Calu3 (cell line): ENCODE measurements at regions of chr15 and their contacts with region 1.

Region 1: DNA sequence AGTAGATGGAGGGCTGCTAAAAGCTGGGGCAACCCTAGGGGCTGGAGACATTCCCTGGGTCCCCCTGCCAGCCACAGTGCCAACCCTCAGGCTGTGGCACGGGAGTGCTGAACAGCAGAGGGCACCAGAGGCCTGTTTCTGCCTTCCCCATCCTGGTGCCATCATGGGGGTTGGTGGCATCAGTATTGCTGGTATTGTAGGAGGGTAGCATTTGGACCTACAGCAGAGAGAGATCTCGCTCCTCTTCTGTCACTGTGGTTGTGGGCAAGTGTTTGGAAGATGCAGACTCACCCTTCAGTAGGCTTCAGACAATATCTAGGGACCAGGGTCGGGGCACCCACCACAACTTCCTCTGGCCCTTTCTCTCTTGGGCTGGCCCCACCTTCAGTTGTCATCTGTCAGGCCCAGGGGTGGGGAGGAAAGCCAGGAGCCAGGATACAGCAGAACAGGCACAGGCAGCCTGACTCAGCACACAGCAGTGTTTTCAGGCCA is 123.5 kb downstream of the RPLP1 start:
- DNase-seq: peak; percentile 88
- H3K4me3 Mint-ChIP-seq: no peak overlapping the region
- H3K27ac Mint-ChIP-seq: no peak overlapping the region
- H3K4me1 Mint-ChIP-seq: peaks cover 31% of the 10 kb centered on the region
- H3K27me3 Mint-ChIP-seq: peaks cover 71% of the 10 kb centered on the region
- CTCF ChIP-seq: peak; percentile 89

Region 2: GRCh38 chr15:69489073-69489571 is 87.0 kb before region 1 on chr15:
- CTCF ChIA-PET with region 1: no interaction called
- intact Hi-C with region 1: loop called (anchors 5 kb)
- DNase-seq: no peak
- H3K4me3 Mint-ChIP-seq: no peak overlapping the region
- H3K27ac Mint-ChIP-seq: no peak overlapping the region
- H3K4me1 Mint-ChIP-seq: no peaks in the 10 kb centered on the region
- H3K27me3 Mint-ChIP-seq: peaks cover 19% of the 10 kb centered on the region
- CTCF ChIP-seq: no peak

Region 3: DNA sequence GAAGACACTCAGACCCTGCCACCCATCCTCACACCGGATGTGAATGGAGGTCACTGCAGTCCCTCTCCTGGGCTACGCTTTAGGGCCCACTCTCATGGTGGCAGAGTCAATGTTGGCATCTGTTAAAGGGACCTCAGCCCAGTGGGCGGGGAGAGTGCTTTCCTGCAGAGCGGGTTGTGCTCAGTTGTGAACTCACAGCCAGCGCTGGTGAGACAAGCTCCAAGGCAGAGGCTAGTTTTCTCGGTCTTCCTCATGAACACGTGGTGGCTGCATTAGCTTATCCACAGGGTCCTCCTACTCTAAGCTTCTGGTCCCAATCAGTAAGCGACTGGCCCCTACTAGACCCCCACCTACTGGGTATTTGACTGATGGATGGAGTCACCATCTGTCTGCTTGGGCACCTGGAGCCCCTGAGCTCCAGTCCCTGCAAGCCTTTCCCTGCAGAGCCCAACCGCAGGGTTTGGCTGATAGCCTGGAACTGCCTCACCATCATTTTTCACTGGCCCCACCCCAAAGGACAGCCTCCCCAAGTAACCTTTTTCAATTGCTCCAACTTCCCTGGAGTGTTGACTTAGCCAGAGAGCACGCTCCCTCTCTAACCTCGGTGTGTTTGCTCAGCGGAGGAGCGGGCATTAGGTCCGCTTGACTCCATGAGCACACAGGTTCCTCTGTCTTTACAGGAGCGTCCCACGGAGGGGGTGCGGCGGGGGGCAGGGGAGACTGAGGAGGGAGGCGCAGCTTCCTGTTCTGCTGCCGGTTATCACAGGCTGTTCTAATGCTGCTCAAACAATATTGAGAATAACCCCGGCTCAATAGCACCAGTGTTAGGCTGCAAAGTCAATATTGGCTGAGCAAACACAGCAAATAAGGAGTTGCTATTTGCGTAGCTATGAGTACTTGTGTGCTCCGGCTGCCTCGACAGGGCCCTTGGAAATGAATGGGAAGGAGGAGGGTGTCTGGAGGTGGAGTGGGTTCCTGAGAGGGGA is 18.2 kb after region 1 on chr15:
- CTCF ChIA-PET with region 1: interaction called, 10 read pairs
- intact Hi-C with region 1: no loop called
- DNase-seq: peak; percentile 97
- H3K4me3 Mint-ChIP-seq: peak overlapping the region; percentile 51
- H3K27ac Mint-ChIP-seq: peak overlapping the region; percentile 57
- H3K4me1 Mint-ChIP-seq: peaks cover 52% of the 10 kb centered on the region
- H3K27me3 Mint-ChIP-seq: peaks cover 65% of the 10 kb centered on the region
- CTCF ChIP-seq: no peak

Region 4: DNA sequence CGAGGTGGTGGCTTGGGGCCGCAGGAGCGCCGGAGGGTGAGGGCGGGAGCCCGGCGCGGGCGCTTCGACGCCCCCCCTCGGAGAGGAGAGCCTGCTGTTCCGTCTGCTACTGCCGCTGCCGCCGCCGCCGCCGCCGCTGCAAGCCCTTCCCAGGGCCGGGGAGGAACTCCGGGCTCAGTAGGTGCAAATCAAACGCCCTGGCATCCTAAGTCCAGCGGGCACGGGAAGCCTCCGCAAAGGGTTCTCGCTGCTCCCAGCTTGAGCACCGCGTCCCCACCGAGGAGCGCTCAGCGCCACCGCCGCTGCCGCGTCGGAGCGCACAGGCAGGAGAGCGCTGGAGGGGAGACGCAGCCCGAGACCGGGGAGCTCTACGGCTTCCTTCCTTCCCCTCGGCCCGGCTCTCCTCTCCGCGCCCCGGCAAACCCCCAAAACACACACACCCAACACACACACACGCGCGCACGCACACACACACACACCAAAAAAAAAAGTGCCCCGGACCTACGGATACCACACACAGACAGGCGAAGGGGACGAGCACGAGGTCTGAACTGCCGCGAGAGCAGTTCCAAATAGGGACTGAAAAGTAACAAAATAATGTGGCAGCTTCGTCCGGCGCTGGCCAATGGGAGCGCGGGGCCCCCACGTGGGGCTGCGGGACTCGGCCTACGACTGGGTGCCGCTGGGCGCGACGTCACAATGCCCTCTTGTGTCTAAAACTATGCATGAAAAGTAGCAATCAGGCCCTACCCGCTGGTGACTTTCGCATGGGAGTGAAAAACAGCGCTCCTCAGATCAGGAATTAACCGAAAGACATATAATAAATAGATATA is 521.5 kb after region 1 on chr15 and contains the start of gene TLE3:
- CTCF ChIA-PET with region 1: interaction called, 4 read pairs
- intact Hi-C with region 1: loop called (anchors 5 kb)
- DNase-seq: peak; percentile 99
- H3K4me3 Mint-ChIP-seq: peak within 1 kb of the TSS; percentile 97
- H3K27ac Mint-ChIP-seq: peak within 1 kb of the TSS; percentile 96
- H3K4me1 Mint-ChIP-seq: peaks cover 48% of the 10 kb centered on the region
- H3K27me3 Mint-ChIP-seq: peaks cover 2% of the 10 kb centered on the region
- CTCF ChIP-seq: no peak
- total RNA-seq, gene TLE3: 53.5 and 54.8 TPM in 2 replicates

Region 5: GRCh38 chr15:70488002-70488605 is 912.0 kb after region 1 on chr15:
- CTCF ChIA-PET with region 1: no interaction called
- intact Hi-C with region 1: loop called (anchors 10 kb)
- DNase-seq: peak; percentile 86
- H3K4me3 Mint-ChIP-seq: no peak overlapping the region
- H3K27ac Mint-ChIP-seq: no peak overlapping the region
- H3K4me1 Mint-ChIP-seq: peaks cover 45% of the 10 kb centered on the region
- H3K27me3 Mint-ChIP-seq: peaks cover 4% of the 10 kb centered on the region
- CTCF ChIP-seq: peak; percentile 95